Activated naive CD4-positive, alpha-beta T cell treated with anti-CD3 and anti-CD28 coated beads for 36 hours (primary cell): ENCODE measurements at regions of chr17 and their contacts with region 1.

Region 1: GRCh38 chr17:80477647-80478478 is 1.5 kb upstream of the NPTX1 start:
- DNase-seq: peak; percentile 65
- H3K4me3 Mint-ChIP-seq: no peak overlapping the region
- H3K27ac Mint-ChIP-seq: no peak overlapping the region
- H3K4me1 Mint-ChIP-seq: peaks cover 14% of the 10 kb centered on the region
- H3K27me3 Mint-ChIP-seq: peaks cover 59% of the 10 kb centered on the region

Region 2: DNA sequence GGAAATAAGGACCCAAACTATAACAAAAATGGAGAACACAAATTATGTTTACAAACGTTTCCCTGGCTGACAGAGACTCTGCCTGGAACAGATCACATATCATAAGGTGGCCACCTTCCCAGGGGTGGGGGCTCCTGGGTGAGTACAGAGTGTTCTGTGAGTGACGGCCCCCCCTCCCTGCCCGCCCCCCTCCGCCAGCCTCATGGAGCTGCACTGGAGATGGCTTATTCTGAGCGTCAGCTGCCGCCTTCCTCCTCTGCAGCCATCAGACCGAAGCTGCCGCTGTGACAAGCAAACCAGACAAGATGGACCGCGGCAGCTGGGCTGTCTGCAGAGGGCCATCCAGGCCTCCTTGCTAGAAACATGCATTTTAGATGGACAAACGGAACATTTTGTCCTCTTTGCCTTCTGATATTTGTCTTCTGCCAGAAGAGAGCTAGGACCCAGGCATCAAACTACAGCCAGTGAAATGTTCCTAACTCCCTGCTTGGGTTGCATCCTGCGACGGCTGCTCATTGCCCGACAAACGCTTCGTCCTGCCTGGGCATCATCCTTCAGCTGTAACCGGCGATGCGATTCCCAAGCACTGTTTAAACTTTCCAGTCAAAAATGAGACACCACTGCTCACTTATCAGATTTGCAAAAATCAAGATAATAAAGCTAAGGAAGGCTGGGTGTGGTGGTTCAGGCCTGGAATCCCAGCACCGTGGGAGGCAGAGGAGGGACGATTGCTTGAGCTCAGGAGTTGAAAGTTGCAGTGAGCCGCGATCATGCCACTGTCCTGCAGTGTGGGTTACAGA is 51.4 kb after region 1 on chr17:
- CTCF ChIA-PET with region 1: no interaction called
- intact Hi-C with region 1: no loop called
- DNase-seq: no peak
- H3K4me3 Mint-ChIP-seq: no peak overlapping the region
- H3K27ac Mint-ChIP-seq: no peak overlapping the region
- H3K4me1 Mint-ChIP-seq: no peaks in the 10 kb centered on the region
- H3K27me3 Mint-ChIP-seq: peaks cover 13% of the 10 kb centered on the region

Region 3: DNA sequence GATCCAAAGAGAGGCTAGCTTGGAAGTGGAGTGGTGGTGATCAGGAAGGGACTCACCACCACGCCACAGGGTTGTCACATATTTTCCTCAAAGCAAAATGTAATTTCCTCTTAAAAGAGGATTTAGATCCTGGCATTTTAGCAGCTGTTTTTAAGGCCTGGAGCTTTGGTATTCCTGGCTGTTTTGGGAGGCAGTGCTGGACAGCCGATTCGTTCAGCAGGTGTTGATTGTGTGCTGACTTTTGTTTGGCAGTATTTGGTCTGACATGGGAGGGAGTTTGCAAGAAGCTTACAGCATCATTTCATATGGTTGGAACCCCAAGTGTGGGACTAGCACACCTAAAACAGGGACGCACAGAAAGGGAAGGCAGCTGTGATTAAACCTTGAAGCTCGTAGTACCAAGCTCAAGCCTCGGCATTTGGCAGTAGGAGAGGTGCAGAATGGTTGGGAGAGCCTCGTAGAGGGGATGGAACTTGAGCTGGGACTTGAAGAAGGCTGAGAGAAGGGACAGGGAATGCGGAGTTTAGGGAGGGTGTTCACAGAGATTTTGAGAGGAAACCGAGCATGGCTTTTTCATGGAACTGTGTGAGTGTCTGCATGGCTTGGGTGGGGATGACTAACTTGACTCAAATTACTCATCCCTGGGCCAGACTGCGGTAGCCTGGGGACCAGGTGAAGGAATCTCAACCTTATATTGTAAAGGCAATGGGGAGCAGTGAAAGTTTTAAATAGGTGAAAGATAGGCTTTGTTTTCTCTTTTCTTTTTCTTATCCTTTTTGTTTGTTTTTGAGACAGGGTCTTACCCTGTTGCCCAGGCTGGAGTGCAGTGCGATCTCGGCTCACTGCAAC is 119.1 kb after region 1 on chr17:
- CTCF ChIA-PET with region 1: no interaction called
- intact Hi-C with region 1: no loop called
- DNase-seq: peak; percentile 28
- H3K4me3 Mint-ChIP-seq: no peak overlapping the region
- H3K27ac Mint-ChIP-seq: no peak overlapping the region
- H3K4me1 Mint-ChIP-seq: peaks cover 60% of the 10 kb centered on the region
- H3K27me3 Mint-ChIP-seq: no peaks in the 10 kb centered on the region

Region 4: GRCh38 chr17:80899402-80900268 is 421.8 kb after region 1 on chr17:
- CTCF ChIA-PET with region 1: interaction called, 5 read pairs
- intact Hi-C with region 1: loop called (anchors 2 kb)
- DNase-seq: peak; percentile 93
- H3K4me3 Mint-ChIP-seq: no peak overlapping the region
- H3K27ac Mint-ChIP-seq: no peak overlapping the region
- H3K4me1 Mint-ChIP-seq: peaks cover 38% of the 10 kb centered on the region
- H3K27me3 Mint-ChIP-seq: no peaks in the 10 kb centered on the region

Region 5: DNA sequence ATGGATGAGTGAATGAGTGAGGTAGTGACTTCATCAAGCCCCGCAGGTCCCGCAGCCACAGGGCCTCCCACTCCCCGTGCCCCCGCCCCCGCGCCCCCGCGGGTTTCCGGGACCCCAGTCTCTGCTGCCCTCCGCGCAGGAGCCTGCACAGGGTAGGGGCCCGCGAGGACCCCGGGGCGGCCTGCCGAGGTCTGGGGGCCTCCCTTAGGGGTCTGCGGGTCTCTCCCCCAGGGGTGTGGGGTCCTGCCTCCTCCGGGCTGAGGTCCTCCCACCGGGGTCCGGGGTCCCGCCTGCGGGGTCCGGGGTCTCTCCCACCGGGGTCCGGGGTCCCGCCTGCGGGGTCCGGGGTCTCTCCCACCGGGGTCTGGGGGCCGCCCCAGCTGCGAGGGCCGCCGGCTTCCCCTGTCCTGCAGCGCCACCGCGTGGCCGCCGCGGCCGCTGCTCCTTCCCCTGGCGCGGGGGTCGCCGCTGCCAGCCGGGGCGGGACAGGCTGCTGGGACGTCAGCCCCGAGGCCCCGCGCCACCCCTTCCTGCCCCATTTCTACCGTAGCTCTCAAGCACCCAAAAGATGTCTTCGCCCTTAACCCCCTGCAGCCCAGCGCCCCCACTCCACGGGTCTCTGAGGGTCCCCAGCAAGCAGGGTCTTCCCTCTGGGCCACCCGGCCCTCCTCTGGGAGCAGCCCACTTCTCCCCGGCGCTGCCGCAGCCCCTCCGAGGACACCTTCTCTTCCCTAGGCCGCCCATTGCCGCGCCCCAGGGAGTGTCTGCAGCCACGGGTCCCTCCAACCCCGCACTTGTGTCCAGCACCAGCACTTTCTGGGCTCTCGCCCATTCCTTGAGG is 503.4 kb after region 1 on chr17:
- CTCF ChIA-PET with region 1: no interaction called
- intact Hi-C with region 1: loop called (anchors 1 kb)
- DNase-seq: peak; percentile 27
- H3K4me3 Mint-ChIP-seq: no peak overlapping the region
- H3K27ac Mint-ChIP-seq: no peak overlapping the region
- H3K4me1 Mint-ChIP-seq: peaks cover 12% of the 10 kb centered on the region
- H3K27me3 Mint-ChIP-seq: no peaks in the 10 kb centered on the region